ENCODE measurements at regions of chr4 and their contacts with region 1.

Region 1: DNA sequence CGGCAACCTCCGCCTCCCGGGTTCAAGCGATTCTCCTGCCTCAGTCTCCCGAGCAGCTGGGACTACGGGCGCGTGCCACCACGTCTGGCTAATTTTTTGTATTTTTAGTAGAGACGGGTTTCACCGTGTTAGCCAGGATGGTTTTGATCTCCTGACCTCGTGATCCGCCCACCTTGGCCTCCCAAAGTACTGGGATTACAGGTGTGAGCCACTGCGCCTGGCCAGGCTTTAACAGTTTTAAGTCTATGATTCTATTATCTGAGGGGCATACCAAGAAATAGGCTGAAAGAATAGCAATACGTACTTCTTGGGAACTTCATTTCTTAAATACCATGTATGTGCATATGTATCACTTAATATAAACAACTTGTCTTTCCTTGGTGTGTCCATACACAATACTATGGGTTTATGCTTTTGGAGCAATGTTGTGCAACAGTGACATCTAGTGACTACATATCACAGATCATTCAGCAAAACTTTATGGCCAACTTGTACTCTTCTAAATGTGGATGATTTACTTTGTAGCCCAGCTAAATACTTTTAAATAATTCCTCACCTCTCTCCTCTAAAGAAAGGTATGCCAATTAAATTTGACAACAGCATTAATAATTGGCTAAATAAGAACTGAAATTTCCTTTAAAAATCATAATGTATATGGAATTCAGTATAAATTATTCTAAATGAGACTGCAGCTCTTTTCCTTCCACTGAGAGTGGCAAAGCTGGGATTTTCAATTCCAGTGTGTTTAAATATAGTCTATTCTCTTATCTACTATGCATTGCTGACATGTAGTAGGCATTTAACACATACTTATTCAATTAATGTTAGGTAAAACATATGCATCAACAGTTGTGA is 10.4 kb downstream of the SLC9B1 start:
- DNase-seq: no peak
- ATAC-seq: peak; percentile 81

Region 2: GRCh38 chr4:102439812-102440211 is 569.3 kb before region 1 on chr4:
- intact Hi-C with region 1: loop called (anchors 5 kb)
- DNase-seq: no peak
- ATAC-seq: peak; percentile 85

Region 3: DNA sequence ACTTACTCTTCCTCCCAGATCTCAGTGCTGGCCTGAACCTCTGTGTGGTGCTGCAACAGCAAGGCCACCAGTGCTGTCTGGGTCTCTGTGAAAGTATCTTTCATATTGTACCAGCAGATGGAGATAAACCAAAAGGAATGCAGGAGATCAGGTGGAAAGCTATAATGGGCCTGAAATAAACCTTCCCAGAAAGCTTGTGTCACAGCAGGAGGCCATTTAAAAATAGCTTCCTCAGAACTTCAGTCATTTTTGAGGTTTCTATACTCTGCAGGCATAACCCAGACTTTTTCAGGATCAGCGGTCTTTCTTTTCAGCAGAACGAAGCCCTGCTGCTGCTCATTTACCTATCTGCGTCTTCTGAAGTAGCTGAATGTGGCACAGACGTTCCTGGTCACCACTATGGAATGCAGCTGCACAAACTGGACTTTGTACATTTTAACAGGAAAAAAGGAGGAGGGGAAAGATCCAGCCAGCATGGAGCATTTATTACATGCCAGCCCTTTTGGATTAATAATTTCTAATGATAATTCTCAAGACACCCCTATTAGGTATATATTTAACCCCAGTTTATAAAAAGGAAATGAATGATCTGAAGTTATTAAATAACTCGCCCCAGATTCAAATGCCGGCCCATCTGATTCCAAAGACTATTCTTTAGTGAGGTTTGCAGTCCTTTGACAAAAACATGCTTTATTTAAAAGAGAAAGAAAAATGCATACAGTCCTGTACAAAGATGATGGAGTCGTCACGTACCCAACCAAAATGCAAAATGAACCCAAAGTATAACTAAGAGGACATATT is 388.2 kb before region 1 on chr4:
- intact Hi-C with region 1: loop called (anchors 2 kb)
- DNase-seq: no peak
- ATAC-seq: peak; percentile 95